ENCODE measurements at regions of chr9 and their contacts with region 1.

Region 1: GRCh38 chr9:117644133-117644931 is 59.9 kb upstream of the TLR4 start:
- DNase-seq: peak; percentile 68 to 88 (median 87)
- ATAC-seq: peak; percentile 83 to 86
- H3K4me3 ChIP-seq: peak overlapping the region; percentile 53
- H3K27ac ChIP-seq: peak overlapping the region; percentile 30
- H3K4me1 ChIP-seq: peaks cover 3% of the 10 kb centered on the region
- H3K27me3 ChIP-seq: no peaks in the 10 kb centered on the region

Region 2: GRCh38 chr9:117777823-117778222 is 133.5 kb after region 1 on chr9:
- intact Hi-C with region 1: loop called in 2 of 4 experiments (anchors 10 kb)
- DNase-seq: no peak
- ATAC-seq: peak; percentile 53
- H3K4me3 ChIP-seq: no peak overlapping the region
- H3K27ac ChIP-seq: no peak overlapping the region
- H3K4me1 ChIP-seq: no peaks in the 10 kb centered on the region
- H3K27me3 ChIP-seq: no peaks in the 10 kb centered on the region

Region 3: DNA sequence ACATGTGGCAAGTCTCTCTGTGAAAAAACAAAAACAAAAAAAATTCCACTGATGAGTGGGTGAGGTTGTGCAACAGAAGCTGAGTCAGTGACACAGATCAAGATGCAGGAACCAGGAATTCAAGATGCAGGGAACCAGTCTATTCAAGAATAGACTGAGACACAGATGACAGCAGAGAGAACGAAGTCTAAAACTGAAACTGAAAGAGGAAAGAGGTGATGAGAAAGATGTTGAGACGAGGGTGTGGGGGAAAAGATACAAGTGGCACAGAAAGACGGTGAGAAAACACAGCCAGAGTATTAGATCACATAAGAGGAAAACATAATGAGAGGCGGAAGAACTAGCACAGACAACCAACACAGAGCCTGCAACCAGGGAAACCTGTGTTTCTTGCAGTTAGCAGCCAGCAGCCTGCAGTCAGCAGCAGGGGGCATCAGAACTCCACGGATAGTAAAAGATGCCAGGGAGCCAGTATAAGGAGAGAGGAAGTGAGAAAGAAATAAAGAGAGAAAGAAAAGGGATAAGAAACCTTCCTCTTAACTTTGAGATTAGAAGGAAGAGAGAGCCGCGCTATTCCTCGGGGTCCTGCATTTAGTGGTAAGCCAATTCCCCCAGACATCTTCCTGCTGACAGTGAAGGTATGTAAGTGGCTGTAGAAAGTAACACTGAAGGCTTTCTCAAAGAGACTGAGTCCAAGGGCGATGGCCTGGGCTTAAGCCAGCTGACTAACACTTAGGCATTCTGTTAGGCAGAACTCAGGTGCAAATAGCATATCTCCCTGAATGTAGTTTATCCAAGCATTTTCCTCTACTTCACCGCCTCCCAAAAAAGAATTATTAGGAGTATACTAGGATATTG is 138.8 kb after region 1 on chr9:
- intact Hi-C with region 1: loop called in 2 of 4 experiments (anchors 10 kb)
- DNase-seq: peak; percentile 70 to 90 (median 83)
- ATAC-seq: peak; percentile 93 to 96
- H3K4me3 ChIP-seq: peak overlapping the region; percentile 72
- H3K27ac ChIP-seq: no peak overlapping the region
- H3K4me1 ChIP-seq: peaks cover 2% of the 10 kb centered on the region
- H3K27me3 ChIP-seq: no peaks in the 10 kb centered on the region

Measured in right cardiac atrium (tissue), 5 donors.